ENCODE measurements at regions of chr2 and their contacts with region 1.

Region 1: DNA sequence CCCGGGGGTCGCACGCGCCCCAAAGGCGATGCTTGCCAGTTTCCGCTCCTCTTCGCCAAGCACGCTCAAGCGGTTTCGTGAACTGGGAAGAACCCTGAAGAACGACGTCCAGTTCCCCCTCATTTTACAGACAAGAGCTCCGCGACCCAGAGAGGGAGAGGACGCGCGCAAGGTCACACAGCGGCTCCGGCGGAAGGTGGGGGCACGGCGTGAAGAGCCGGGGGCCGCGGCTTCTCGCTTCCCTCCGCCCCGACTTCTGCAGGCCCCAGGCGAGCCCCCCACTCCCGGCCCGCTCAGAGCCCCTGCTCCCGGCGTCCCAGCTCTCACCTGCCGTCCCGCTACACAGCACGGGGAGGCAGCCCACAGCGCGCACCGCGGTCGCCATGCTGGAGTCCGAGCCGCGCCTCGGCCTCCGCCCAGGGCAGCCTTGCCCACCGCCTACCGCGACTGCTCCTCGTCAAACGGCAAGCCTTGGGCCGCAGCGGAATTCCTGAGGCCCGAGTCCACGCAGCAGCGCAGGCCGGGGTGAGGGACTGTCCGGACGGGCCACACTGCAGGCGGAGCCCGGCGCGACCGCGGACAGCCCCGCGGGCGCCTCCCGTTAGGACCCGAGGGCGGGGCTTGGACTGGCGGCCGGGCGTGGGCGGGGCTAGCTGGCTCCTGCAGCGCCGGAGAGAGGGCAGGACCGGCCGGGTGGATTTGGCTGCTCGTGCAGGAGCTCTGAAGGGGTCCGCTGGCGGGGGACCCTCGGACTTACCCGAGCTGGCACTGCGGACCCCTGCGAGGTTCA is at the start of gene MRPS5:
- DNase-seq: peak; percentile 95
- total RNA-seq, gene MRPS5: 69.4 TPM

Region 2: GRCh38 chr2:95159690-95160449 is 38.3 kb after region 1 on chr2 and contains the start of gene ZNF514:
- intact Hi-C with region 1: loop called (anchors 2 kb)
- DNase-seq: peak; percentile 86
- total RNA-seq, gene ZNF514: 14.7 TPM

Region 3: GRCh38 chr2:95165129-95166064 is 43.8 kb after region 1 on chr2 and contains the start of gene ZNF2:
- intact Hi-C with region 1: loop called (anchors 2 kb)
- DNase-seq: peak; percentile 98
- total RNA-seq, gene ZNF2: 4.1 TPM

Region 4: DNA sequence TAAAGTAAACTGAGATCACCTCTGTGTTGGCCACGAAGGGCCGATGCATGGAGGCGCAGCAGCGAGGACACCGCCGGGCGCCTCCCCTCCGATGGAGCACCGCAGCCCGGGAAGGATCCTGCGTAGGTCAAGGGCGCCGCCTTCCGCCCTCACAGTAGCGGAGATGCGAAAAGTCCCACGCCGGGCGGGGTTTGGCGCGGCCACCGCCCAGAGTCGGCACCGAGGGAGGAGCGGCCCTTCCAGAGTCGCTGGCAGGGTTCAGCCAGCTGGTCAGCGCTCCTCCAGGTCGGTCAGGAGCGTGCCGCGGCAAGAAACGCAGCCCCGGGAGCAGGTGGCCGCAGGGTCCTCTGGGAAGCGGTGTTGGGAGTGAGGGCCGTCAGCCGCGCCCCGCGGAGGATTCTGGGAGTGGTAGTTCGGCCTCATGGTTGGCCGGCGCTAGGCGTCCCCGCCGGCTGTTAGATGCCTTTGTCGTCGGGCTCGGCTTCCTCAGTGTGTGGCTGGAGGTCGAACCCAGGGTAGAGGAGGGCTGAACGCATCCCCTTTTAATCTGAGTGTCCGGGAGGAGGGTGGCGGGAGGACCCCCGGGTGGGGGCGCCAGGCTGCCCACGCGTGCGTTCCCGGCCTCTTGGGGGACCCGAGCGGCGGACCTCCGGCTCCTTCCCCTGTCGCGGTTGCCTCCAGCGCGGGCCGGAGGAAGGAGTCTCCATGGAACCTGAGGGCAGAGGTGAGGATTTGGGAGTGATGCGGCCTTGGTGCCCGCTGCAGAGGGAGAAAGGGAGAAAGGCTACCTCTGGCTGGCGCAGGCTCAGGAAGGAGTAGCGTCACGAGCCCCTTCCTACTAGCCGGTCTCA is 85.7 kb after region 1 on chr2 and contains the start of gene ZNF892:
- intact Hi-C with region 1: loop called (anchors 5 kb)
- DNase-seq: peak; percentile 96
- total RNA-seq, gene ZNF892: 4.8 TPM